CD14-positive monocyte (primary cell): ENCODE measurements at regions of chr7 and their contacts with region 1.

Region 1: GRCh38 chr7:103317016-103317415 is 19.8 kb downstream of the PMPCB start:
- DNase-seq: no peak
- H3K4me3 ChIP-seq: no peak overlapping the region
- H3K4me3 Mint-ChIP-seq: no peak overlapping the region
- H3K27ac ChIP-seq: no peak overlapping the region
- H3K27ac Mint-ChIP-seq: peak overlapping the region in 4 of 7 donors; percentile 39 to 46 (median 40)
- H3K4me1 ChIP-seq: no peaks in the 10 kb centered on the region
- H3K4me1 Mint-ChIP-seq: peaks cover 5% of the 10 kb centered on the region
- H3K27me3 ChIP-seq: no peaks in the 10 kb centered on the region
- H3K27me3 Mint-ChIP-seq: peaks cover 0 to 2% (median 0%) of the 10 kb centered on the region in 3 donors
- CTCF ChIP-seq: no peak

Region 2: DNA sequence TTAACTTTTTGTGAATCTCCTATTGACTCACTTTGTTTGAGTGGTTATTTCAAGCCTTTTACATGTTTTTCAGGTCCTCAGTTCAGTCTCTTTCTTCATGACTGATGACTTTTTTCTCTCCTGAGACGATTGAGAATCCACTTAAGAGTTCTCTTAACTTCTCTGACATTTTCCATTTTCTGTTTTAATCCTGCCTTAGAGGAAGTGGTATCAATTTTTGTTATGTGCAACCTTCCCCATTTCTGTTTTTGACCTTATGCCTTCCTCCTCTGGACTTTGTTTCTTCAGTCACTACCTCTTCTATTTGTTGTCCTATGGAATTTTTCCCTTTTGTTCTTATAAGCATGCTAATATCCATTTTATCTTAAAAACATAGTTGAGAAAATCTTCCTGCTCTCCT is 32.8 kb after region 1 on chr7:
- intact Hi-C with region 1: loop called in 1 of 2 experiments (anchors 5 kb)
- DNase-seq: no peak
- H3K4me3 ChIP-seq: peak overlapping the region; percentile 11 to 96 (median 36)
- H3K4me3 Mint-ChIP-seq: peak overlapping the region; percentile 28 to 80
- H3K27ac ChIP-seq: peak overlapping the region; percentile 49 to 91
- H3K27ac Mint-ChIP-seq: peak overlapping the region; percentile 27 to 95 (median 84)
- H3K4me1 ChIP-seq: peaks cover 32 to 48% of the 10 kb centered on the region in 2 donors
- H3K4me1 Mint-ChIP-seq: peaks cover 41% of the 10 kb centered on the region
- H3K27me3 ChIP-seq: no peaks in the 10 kb centered on the region
- H3K27me3 Mint-ChIP-seq: no peaks in the 10 kb centered on the region
- CTCF ChIP-seq: no peak

Region 3: GRCh38 chr7:103369430-103369829 is 52.4 kb after region 1 on chr7:
- intact Hi-C with region 1: loop called in 1 of 2 experiments (anchors 10 kb)
- DNase-seq: no peak
- H3K4me3 ChIP-seq: no peak overlapping the region
- H3K4me3 Mint-ChIP-seq: no peak overlapping the region
- H3K27ac ChIP-seq: no peak overlapping the region
- H3K27ac Mint-ChIP-seq: no peak overlapping the region
- H3K4me1 ChIP-seq: no peaks in the 10 kb centered on the region
- H3K4me1 Mint-ChIP-seq: no peaks in the 10 kb centered on the region
- H3K27me3 ChIP-seq: no peaks in the 10 kb centered on the region
- H3K27me3 Mint-ChIP-seq: peaks cover 0 to 2% (median 0%) of the 10 kb centered on the region in 3 donors
- CTCF ChIP-seq: no peak